Mammary epithelial cell (primary cell): ENCODE measurements at regions of chr14 and their contacts with region 1.

Region 1: DNA sequence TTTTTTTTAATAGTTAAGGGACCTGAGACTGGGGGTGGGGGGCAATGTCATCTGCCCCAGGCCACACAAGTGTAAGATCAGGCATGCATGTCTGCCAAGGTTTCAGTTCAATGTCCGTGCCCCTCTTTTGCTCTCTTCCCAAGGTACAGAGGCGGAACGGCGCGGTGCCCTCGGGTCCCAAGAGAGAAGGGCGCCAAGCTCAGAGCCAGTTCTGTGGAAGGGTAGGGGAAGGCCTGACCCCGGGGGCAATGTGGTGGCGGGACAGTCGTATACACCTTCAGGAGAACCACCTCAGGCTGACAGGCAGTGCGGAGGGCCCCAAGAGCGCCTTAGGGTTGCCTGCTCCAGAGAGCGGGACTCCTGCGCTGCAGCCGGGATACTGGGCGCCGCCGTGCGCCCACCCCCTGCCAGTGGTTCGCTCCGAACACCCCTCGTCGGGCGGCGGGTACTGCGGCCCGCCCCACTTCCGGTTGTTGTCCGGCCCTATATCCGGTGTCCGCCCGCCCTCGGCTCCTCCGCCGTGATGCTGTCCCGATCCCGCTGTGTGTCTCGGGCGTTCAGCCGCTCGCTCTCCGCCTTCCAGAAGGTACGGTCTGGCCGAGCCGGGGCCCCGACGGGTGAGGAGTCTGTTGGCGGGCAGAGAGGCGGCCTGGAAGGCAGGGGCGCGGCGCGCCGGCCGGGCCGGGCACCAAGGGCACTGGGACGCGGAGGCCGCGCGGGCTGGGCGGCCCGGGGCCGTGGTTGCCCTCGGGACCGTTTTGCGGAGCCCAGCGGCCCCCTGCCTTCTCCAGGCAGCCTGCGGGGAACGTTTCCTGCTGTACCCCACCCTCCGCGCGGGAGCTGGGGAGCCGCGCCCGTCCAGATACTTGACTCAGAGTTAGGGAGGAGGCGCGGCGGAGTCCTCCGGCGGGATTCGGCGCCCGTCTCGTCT is at the start of gene DLST:
- DNase-seq: peak; percentile 80
- H3K4me3 ChIP-seq: peak within 1 kb of the TSS; percentile 90 to 99 (median 94)
- H3K27ac ChIP-seq: peak within 1 kb of the TSS; percentile 92
- H3K4me1 ChIP-seq: peaks cover 47% of the 10 kb centered on the region
- H3K27me3 ChIP-seq: no peaks in the 10 kb centered on the region
- CTCF ChIP-seq: no peak
- total RNA-seq, gene DLST: 63.3 to 145 TPM

Region 2: DNA sequence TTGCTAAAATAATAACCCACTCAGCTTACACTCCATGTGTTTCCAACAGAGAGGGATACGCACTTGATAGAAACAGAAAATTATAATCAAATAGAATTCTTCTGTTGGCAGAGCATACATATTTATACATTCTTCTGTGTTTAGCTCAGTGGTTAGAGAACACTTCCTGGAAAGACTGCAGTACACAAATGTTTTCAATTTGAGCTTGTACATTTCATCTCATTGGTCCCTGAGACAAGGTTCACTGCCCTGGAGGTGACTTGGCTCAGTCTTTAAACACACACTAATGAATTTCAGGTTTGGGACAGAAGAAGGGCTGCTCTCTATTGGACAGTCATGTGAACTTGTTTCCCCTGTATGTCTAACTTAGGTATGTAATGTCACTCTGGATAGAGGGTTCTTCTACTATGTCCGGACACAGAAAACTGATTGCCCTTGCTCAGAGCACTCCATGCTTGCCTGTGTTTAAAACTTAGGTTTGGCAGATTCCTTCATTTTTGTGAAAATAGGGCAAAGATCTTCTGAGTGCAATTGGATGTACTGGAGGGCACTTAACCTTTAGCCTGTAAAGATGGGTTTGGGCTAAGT is 28.7 kb before region 1 on chr14:
- CTCF ChIA-PET with region 1: no interaction called
- dilution Hi-C with region 1: no loop called
- in situ Hi-C with region 1: no loop called
- intact Hi-C with region 1: loop called (anchors 2 kb)
- DNase-seq: no peak
- H3K4me3 ChIP-seq: no peak overlapping the region
- H3K27ac ChIP-seq: no peak overlapping the region
- H3K4me1 ChIP-seq: peaks cover 28% of the 10 kb centered on the region
- H3K27me3 ChIP-seq: no peaks in the 10 kb centered on the region
- CTCF ChIP-seq: no peak

Region 3: DNA sequence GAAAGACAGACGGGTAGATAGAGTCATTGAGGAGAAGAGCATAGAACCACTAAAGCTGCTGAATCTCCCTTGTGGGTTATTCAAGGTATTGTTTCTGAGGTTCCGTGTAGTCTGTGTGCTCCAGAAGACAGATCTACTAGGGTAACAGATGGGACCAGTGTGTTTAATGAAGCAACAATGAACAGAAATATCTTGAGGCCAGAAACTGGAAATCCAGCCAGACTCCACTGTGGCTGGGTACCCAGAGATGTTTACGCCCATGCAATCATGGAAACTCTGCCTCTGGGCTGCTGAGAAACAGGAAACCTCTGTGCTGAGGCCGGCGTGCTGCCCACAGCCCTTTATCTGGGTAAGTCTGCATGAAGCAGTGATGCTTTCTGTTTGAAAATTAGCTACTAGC is 14.0 kb before region 1 on chr14:
- CTCF ChIA-PET with region 1: interaction called, 11 read pairs
- dilution Hi-C with region 1: no loop called
- in situ Hi-C with region 1: no loop called
- intact Hi-C with region 1: no loop called
- DNase-seq: no peak
- H3K4me3 ChIP-seq: no peak overlapping the region
- H3K27ac ChIP-seq: no peak overlapping the region
- H3K4me1 ChIP-seq: no peaks in the 10 kb centered on the region
- H3K27me3 ChIP-seq: no peaks in the 10 kb centered on the region
- CTCF ChIP-seq: no peak

Region 4: DNA sequence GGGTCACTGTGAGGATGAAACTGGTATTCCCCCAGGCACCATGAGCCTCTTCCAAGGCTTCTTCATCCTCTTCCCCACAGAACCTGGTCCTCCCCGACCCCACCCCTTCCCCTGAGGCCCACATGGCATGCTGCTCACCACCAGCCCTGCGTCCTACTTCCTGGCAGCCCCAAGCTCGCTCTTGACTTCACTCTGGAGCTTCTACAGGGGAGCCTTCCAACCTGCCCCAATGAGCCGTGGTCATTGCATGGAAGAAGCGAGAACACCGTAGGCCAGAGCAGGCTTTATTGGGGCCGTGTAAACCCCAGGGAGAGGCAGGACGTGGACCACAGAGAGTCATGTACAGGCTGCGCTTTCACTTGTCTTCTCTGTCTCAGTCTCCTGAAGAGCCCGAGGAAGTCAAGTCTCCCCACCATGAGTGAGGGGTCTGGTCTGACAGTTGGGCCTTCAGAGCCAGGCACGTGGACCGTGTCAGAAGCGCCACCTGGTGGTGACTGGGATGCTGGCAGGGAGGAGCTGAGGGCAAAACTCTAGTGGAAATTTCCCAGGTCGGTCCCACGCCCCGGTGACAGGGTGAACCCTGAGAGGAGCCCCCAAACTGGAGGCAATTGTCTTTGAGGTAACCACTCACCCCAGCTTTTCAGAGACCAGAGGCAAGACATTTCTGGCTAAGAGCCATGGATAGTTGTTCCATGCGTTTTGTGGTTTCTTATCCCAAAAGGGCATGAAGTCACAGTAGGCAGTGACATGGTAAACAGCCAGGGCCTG is 23.9 kb after region 1 on chr14:
- CTCF ChIA-PET with region 1: interaction called, 16 read pairs
- dilution Hi-C with region 1: no loop called
- in situ Hi-C with region 1: no loop called
- intact Hi-C with region 1: loop called (anchors 1 kb)
- DNase-seq: peak; percentile 20
- H3K4me3 ChIP-seq: no peak overlapping the region
- H3K27ac ChIP-seq: no peak overlapping the region
- H3K4me1 ChIP-seq: no peaks in the 10 kb centered on the region
- H3K27me3 ChIP-seq: no peaks in the 10 kb centered on the region
- CTCF ChIP-seq: peak; percentile 88 to 96

Region 5: DNA sequence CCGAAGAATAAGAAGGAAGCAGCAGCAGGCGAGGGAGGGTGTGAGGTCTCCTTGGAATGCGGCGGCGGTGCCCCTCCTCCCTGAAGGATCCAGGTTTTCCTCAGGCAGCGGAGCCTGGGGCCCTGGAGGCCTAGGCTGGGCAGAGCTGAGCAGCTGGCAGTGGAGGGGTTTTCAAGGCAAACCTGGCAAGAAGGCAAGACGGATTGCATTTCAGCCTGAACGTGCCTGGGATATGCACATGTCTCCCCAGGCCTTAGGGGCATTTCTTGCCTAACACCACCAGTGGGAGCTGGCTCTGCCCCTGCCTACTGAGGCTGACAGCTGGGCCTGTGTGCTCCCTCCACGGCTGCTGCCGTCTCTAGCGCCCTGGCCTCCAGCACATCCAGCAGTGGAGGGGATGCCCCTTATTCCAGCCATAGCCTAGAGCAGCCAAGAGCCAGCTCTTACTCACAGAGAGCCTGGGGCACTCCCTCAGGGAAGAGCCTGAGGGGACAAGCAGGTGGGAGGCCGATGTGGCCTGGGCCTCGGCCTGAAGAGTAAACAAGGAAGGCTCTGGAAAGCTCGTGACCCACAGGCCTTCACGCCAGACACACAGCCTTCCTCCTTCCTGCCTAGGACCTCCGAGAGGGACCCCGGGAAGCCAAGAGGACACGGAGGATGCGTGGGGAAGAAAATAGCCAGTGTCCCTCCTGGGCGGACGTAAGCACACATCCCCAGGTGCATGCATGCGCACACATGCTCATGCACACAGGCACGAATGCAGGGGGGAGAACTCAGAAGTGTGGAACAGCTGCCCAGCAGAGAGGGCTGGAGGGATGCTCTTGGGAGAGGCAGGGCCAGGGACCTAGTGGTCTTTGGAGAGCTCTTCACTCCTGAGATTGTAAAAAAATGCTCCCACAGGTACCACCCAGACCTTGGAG is 98.0 kb after region 1 on chr14:
- CTCF ChIA-PET with region 1: no interaction called
- dilution Hi-C with region 1: no loop called
- in situ Hi-C with region 1: no loop called
- intact Hi-C with region 1: no loop called
- DNase-seq: no peak
- H3K4me3 ChIP-seq: no peak overlapping the region
- H3K27ac ChIP-seq: no peak overlapping the region
- H3K4me1 ChIP-seq: peaks cover 31% of the 10 kb centered on the region
- H3K27me3 ChIP-seq: no peaks in the 10 kb centered on the region
- CTCF ChIP-seq: peak; percentile 8 to 26